Activated CD8-positive, alpha-beta T cell treated with anti-CD3 and anti-CD28 coated beads for 36 hours (primary cell): ENCODE measurements at regions of chr6 and their contacts with region 1.

Region 1: GRCh38 chr6:144013486-144013909 is 5.4 kb upstream of the PLAGL1 start:
- DNase-seq: peak; percentile 81
- ATAC-seq: peak; percentile 37
- H3K4me3 Mint-ChIP-seq: no peak overlapping the region
- H3K27ac Mint-ChIP-seq: no peak overlapping the region
- H3K4me1 Mint-ChIP-seq: peaks cover 4% of the 10 kb centered on the region
- H3K27me3 Mint-ChIP-seq: peaks cover 4% of the 10 kb centered on the region
- CTCF ChIP-seq: peak; percentile 96

Region 2: GRCh38 chr6:143570147-143570853 is 443.2 kb before region 1 on chr6:
- CTCF ChIA-PET with region 1: interaction called, 78 read pairs
- POLR2A ChIA-PET with region 1: no interaction called
- intact Hi-C with region 1: loop called (anchors 2 kb)
- DNase-seq: peak; percentile 40
- ATAC-seq: no peak
- H3K4me3 Mint-ChIP-seq: no peak overlapping the region
- H3K27ac Mint-ChIP-seq: no peak overlapping the region
- H3K4me1 Mint-ChIP-seq: peaks cover 30% of the 10 kb centered on the region
- H3K27me3 Mint-ChIP-seq: no peaks in the 10 kb centered on the region
- CTCF ChIP-seq: no peak

Region 3: GRCh38 chr6:143575440-143575839 is 438.1 kb before region 1 on chr6:
- CTCF ChIA-PET with region 1: interaction called, 78 read pairs
- POLR2A ChIA-PET with region 1: no interaction called
- intact Hi-C with region 1: loop called (anchors 2 kb)
- DNase-seq: peak; percentile 61
- ATAC-seq: peak; percentile 98
- H3K4me3 Mint-ChIP-seq: no peak overlapping the region
- H3K27ac Mint-ChIP-seq: no peak overlapping the region
- H3K4me1 Mint-ChIP-seq: peaks cover 5% of the 10 kb centered on the region
- H3K27me3 Mint-ChIP-seq: no peaks in the 10 kb centered on the region
- CTCF ChIP-seq: peak; percentile 86

Region 4: GRCh38 chr6:143999406-143999805 is 14.1 kb before region 1 on chr6:
- CTCF ChIA-PET with region 1: interaction called, 16 read pairs
- POLR2A ChIA-PET with region 1: no interaction called
- intact Hi-C with region 1: no loop called
- DNase-seq: no peak
- ATAC-seq: no peak
- H3K4me3 Mint-ChIP-seq: no peak overlapping the region
- H3K27ac Mint-ChIP-seq: no peak overlapping the region
- H3K4me1 Mint-ChIP-seq: no peaks in the 10 kb centered on the region
- H3K27me3 Mint-ChIP-seq: peaks cover 3% of the 10 kb centered on the region
- CTCF ChIP-seq: no peak

Region 5: DNA sequence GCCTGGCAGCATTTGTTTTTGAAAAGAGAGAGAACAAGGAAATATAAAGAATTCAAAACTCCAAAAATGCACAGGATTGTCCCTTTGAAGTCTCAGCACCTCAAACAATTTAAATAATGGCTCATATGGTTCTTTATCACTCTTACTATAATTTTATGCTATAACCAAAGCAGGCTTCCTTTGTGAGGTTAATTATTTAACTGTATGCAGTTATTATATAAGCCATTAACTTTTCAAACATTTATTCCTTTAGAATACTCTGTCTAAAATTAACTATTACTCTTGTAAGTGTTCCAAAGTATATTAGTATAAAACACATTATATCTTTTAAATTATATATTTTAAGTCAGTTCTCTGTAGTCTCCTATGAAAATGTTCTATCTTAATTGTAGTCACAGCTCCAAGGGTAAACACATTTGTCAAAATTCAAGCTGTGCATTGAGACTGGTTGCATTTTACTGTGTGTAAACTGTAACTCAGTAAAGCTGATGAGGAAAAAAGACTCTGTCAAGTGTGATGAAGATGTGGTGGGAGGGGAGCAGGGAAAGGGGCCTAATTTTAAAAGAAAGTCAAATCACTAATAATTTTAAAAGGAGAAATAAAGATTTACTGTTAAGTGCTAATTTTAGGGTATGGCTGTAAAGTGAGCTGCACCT is 14.6 kb after region 1 on chr6:
- CTCF ChIA-PET with region 1: interaction called, 28 read pairs
- POLR2A ChIA-PET with region 1: no interaction called
- intact Hi-C with region 1: no loop called
- DNase-seq: no peak
- ATAC-seq: no peak
- H3K4me3 Mint-ChIP-seq: no peak overlapping the region
- H3K27ac Mint-ChIP-seq: no peak overlapping the region
- H3K4me1 Mint-ChIP-seq: no peaks in the 10 kb centered on the region
- H3K27me3 Mint-ChIP-seq: no peaks in the 10 kb centered on the region
- CTCF ChIP-seq: no peak

Region 6: DNA sequence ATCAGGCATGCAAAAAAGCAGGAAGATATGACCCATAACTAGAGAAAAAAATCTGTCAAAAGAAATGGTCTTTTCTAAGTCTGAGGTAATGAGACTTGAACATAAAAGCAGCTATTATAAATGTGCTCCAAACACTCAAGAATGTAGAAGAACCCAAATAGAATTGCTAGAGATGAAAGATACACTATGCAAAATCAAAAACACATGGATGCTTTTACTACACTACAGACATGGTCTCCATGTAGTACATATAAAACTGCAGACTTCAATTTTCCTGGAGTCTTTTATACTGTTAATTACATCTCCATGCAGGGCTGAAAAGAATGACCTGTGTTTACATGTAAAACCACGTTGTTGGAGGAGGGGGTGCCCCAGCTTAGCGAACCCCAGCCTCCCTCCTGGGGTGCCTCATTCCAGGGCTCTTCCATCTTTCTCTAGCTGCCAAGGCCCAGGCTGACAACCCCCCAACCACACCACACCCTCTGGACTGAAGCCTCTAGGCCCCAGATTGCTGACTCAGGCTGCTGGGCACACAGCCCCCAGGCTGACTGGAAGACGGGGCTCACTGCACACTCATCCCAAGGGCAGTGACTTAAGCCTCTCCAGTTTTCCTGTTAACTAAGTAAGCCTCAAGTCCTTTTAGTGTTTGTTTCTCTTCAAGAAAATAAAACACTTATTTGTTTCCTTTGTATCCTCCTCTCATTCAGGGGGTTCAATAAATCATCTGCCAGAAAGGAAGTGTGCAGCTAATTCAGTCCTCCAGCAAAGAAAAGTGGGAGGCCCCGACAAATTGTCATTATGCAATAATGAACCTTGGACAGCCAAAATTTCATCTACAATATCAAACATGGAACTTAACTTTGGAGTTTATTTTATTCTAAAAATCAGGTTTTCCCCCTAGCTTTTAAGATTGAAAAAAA is 20.6 kb after region 1 on chr6:
- CTCF ChIA-PET with region 1: interaction called, 21 read pairs
- POLR2A ChIA-PET with region 1: no interaction called
- intact Hi-C with region 1: no loop called
- DNase-seq: no peak
- ATAC-seq: no peak
- H3K4me3 Mint-ChIP-seq: no peak overlapping the region
- H3K27ac Mint-ChIP-seq: no peak overlapping the region
- H3K4me1 Mint-ChIP-seq: peaks cover 19% of the 10 kb centered on the region
- H3K27me3 Mint-ChIP-seq: no peaks in the 10 kb centered on the region
- CTCF ChIP-seq: no peak